ENCODE measurements at regions of chr4 and their contacts with region 1.

Region 1: DNA sequence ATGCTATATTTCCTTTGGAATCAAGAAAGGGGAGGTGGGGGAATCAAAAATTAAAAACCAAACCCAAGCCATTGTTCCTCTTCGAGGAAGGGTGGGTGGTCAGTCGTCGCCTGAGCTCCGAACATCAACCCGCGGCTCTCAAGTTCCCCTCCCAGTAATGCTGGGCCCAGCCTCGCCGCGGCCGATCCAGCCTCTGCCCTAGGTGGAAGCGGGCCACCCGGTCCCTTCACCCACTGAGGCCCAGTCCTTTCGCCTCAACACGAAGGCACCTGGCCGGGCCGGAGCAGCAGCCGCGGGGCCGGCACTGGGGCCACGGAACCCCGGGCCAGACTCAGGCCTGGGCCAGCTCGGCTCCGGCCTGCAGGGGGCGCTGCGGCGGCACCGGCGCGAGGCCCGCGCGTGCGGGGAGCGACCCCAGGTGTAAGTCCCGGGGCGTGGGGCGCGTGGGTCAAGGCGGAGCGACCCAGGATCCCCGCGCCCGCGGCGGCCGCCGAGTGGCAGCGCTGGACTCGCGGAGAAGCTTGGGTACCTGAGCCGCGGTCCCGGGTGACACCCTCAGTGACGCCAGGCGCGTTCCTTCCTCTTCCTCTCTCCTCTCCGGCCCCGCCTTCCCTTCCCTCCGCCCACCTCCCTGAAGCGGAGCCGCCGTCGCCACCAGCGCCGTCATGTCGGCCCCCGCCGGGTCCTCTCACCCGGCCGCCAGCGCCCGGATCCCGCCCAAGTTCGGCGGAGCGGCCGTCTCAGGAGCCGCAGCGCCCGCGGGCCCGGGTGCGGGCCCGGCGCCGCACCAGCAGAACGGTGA is at the start of gene SEC24B:
- DNase-seq: peak; percentile 86
- H3K4me3 Mint-ChIP-seq: peak within 1 kb of the TSS; percentile 87
- H3K27ac Mint-ChIP-seq: peak within 1 kb of the TSS; percentile 79
- H3K4me1 Mint-ChIP-seq: peaks cover 57% of the 10 kb centered on the region
- H3K27me3 Mint-ChIP-seq: no peaks in the 10 kb centered on the region
- total RNA-seq, gene SEC24B: 32.5 and 34.0 TPM in 2 replicates

Region 2: DNA sequence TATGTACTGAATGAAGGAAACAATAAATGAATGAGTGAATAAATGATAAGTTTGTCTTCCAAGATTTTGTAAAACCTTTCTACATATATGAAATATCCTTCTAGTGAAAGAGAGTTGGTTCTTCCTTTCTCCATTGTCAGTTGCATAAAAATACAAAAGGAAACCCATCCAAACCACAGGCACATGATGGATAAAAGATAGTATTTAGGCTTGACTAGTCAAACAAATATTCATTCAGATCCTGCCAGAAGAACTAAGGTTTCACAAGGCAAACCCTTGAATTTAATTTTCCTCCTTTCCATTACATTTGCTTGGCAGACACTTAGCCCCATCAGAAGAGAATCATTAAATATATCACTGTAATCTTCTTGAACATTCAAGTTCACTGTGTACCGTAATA is 339.4 kb before region 1 on chr4:
- intact Hi-C with region 1: no loop called
- DNase-seq: no peak
- H3K4me3 Mint-ChIP-seq: no peak overlapping the region
- H3K27ac Mint-ChIP-seq: no peak overlapping the region
- H3K4me1 Mint-ChIP-seq: no peaks in the 10 kb centered on the region
- H3K27me3 Mint-ChIP-seq: peaks cover 3% of the 10 kb centered on the region

Region 3: GRCh38 chr4:109473824-109474223 is 40.4 kb after region 1 on chr4:
- intact Hi-C with region 1: loop called (anchors 2 kb)
- DNase-seq: no peak
- H3K4me3 Mint-ChIP-seq: no peak overlapping the region
- H3K27ac Mint-ChIP-seq: no peak overlapping the region
- H3K4me1 Mint-ChIP-seq: peaks cover 27% of the 10 kb centered on the region
- H3K27me3 Mint-ChIP-seq: no peaks in the 10 kb centered on the region

Region 4: GRCh38 chr4:109648266-109648996 is 215.0 kb after region 1 on chr4:
- intact Hi-C with region 1: loop called (anchors 5 kb)
- DNase-seq: no peak
- H3K4me3 Mint-ChIP-seq: peak overlapping the region; percentile 69
- H3K27ac Mint-ChIP-seq: peak overlapping the region; percentile 84
- H3K4me1 Mint-ChIP-seq: peaks cover 8% of the 10 kb centered on the region
- H3K27me3 Mint-ChIP-seq: no peaks in the 10 kb centered on the region

Region 5: GRCh38 chr4:109708990-109709389 is 275.6 kb after region 1 on chr4:
- intact Hi-C with region 1: no loop called
- DNase-seq: no peak
- H3K4me3 Mint-ChIP-seq: no peak overlapping the region
- H3K27ac Mint-ChIP-seq: no peak overlapping the region
- H3K4me1 Mint-ChIP-seq: peaks cover 4% of the 10 kb centered on the region
- H3K27me3 Mint-ChIP-seq: no peaks in the 10 kb centered on the region

Region 6: DNA sequence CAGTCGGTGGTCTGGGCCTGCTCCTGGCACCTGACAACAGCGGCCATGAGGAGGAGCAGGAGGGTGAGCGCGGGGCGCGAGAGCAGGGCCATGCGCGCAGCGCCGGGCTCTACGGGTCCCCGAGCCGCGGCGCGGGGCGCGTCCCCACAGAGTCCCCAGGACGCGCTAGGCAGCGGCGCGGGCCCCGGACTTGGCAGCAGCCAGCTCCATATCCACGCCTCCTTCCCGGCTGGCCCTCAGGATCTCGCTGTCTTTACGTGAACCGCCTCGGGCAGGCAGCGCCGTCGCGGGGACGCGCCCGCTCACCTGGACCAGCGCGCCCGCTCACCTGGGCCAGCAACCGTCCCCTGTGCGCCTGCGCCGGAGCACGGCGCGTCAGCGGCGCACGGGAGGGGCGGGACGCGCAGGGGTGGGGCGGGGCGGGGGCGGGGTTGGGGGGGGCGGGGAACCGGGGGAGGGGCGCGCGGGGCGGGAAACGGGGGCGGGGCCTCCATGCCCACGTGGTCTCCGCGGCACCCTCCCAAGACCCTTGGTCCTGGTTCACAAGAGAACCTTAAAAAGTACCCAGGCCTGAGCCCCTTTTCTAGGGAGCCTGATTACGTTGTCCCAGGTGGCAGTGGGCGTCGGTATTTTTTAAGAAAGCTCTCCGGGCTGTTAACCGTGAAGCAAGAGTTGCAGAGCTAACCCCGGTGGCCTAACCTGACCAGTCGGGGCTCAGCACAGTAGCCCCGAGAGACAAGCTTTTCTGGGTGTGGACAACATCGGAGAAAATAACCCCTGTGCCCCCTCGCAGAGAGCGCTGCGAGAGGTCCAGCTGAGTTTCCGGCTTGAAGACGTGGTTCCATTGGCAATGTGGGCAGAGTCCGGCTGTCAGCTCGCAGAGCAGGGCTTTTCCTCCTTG is 296.6 kb after region 1 on chr4 and contains the start of gene PLA2G12A:
- intact Hi-C with region 1: loop called (anchors 1 kb)
- DNase-seq: peak; percentile 68
- H3K4me3 Mint-ChIP-seq: peak within 1 kb of the TSS; percentile 84
- H3K27ac Mint-ChIP-seq: peak within 1 kb of the TSS; percentile 62
- H3K4me1 Mint-ChIP-seq: peaks cover 19% of the 10 kb centered on the region
- H3K27me3 Mint-ChIP-seq: peaks cover 2% of the 10 kb centered on the region
- total RNA-seq, gene PLA2G12A: 11.3 and 13.1 TPM in 2 replicates

Measured in activated T-helper 1 cell treated with anti-CD3 and anti-CD28 coated beads, Interleukin-12 subunit alpha, Interleukin-12 subunit beta, Interleukin-2, Interleukin-4 antibody, amounts not matched to agents 30 ng/mL and 10 ng/mL and 1 ng/mL, durations not matched to agents 14 hours and 24 hours and 36 hours (primary cell).